A673 (cell line): ENCODE measurements at regions of chr11 and their contacts with region 1.

Region 1: DNA sequence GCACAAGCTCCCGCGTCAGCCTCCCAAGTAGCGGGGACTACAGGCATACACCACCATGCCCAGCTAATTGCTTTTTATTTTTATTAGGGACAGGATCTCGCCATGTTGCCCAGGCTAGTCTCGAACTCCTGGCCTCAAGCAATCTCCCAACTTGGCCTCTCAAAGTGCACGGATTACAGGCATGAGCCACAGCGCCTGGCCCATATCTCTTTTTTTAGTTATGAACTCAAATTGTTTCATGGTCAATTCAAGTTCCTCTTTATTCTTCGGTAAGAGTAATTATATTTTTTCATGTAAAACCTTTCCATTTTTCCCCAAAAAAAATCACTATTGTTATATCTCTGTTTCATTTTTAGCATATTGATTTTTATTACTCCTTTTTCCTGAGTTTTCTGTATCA is 25.5 kb downstream of the FCHSD2 start:
- DNase-seq: no peak
- H3K4me3 ChIP-seq: no peak overlapping the region
- H3K27ac ChIP-seq: no peak overlapping the region
- H3K4me1 ChIP-seq: peaks cover 6% of the 10 kb centered on the region
- H3K27me3 ChIP-seq: no peaks in the 10 kb centered on the region
- CTCF ChIP-seq: no peak

Region 2: GRCh38 chr11:73157053-73158010 is 40.7 kb after region 1 on chr11:
- CTCF ChIA-PET with region 1: no interaction called
- POLR2A ChIA-PET with region 1: no interaction called
- intact Hi-C with region 1: loop called (anchors 1 kb)
- DNase-seq: no peak
- H3K4me3 ChIP-seq: no peak overlapping the region
- H3K27ac ChIP-seq: no peak overlapping the region
- H3K4me1 ChIP-seq: no peaks in the 10 kb centered on the region
- H3K27me3 ChIP-seq: no peaks in the 10 kb centered on the region
- CTCF ChIP-seq: no peak